A549 (cell line): ENCODE measurements at regions of chr18 and their contacts with region 1.

Region 1: GRCh38 chr18:76803814-76804213 is 18.5 kb upstream of the ZNF236 start:
- DNase-seq: peak; percentile 55 to 76
- ATAC-seq: peak; percentile 86 to 87
- H3K4me3 ChIP-seq: no peak overlapping the region
- H3K27ac ChIP-seq: peak overlapping the region; percentile 26 to 47; a peak in 2 of 6 replicates
- H3K4me1 ChIP-seq: peaks cover 3% of the 10 kb centered on the region; the same call in 1 of the 3 replicates
- CTCF ChIP-seq: peak; percentile 67
- EP300 ChIP-seq: no peak
- POLR2A ChIP-seq: no peak
- RAD21 ChIP-seq: peak; percentile 55 to 73

Region 2: DNA sequence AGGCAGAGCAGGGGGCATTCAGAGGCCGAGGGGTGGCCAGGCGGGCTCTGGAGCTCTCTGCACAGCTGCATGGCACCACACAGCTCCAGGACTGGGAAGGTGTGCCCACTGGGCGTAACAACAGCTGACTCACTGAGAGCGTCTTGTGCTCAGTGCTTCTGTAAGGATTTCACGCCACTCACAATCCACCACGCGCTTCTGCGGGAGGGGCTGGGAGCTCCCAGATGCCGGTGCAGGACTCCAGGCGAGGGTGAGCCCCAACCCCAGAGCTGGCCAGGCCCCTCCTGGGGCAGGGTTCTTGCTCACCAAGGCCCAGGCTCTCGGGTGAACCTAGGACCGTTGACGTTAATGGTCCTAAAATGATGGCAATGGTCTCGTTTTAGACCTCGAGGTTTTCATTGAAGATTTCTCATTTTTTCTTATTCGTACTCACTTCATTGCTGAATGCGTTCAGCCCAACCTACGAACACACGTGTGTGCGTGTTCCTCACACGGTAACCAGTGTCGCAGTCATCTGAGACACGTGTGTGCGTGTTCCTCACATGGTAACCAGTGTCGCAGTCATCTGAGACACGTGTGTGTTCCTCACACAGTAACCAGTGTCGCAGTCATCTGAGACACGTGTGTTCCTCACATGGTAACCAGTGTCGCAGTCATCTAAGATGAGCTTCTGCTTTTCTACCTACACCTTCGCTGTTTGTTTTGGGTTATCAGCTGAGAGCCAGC is 19.9 kb before region 1 on chr18:
- CTCF ChIA-PET with region 1: interaction called, 45 read pairs
- POLR2A ChIA-PET with region 1: interaction called, 3 read pairs
- DNase-seq: no peak
- ATAC-seq: no peak
- H3K4me3 ChIP-seq: no peak overlapping the region
- H3K27ac ChIP-seq: no peak overlapping the region
- H3K4me1 ChIP-seq: no peaks in the 10 kb centered on the region
- CTCF ChIP-seq: no peak
- EP300 ChIP-seq: no peak
- POLR2A ChIP-seq: no peak
- RAD21 ChIP-seq: no peak

Region 3: DNA sequence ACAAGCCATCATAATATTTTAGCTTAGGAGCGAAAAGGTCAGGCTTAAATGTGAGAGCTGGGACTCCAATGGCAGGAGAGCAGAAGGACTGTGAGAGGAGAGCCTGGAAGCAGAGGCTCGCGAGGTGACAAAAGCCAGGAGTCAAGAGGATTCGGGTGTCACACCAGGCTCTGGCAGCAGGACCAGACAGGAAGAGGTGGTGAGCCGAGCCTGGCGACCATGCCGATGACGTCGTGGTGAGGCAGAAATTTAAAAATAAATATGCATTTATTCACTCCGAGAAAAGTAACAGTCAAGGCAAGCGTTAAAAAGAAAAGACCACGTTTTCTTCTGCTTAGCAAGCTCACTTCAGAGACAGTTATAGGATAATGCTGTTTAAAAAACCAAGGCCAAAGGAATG is 12.7 kb before region 1 on chr18:
- CTCF ChIA-PET with region 1: interaction called, 45 read pairs
- POLR2A ChIA-PET with region 1: no interaction called
- DNase-seq: no peak
- ATAC-seq: no peak
- H3K4me3 ChIP-seq: no peak overlapping the region
- H3K27ac ChIP-seq: no peak overlapping the region
- H3K4me1 ChIP-seq: no peaks in the 10 kb centered on the region
- CTCF ChIP-seq: no peak
- EP300 ChIP-seq: no peak
- POLR2A ChIP-seq: no peak
- RAD21 ChIP-seq: no peak

Region 4: GRCh38 chr18:76822510-76823160 is 18.8 kb after region 1 on chr18 and contains the start of gene ZNF236:
- CTCF ChIA-PET with region 1: interaction called, 67 read pairs
- POLR2A ChIA-PET with region 1: interaction called, 7 read pairs
- DNase-seq: peak; percentile 34 to 76
- ATAC-seq: peak; percentile 56 to 78
- H3K4me3 ChIP-seq: peak within 1 kb of the TSS; percentile 71
- H3K27ac ChIP-seq: peak within 1 kb of the TSS; percentile 92 to 100
- H3K4me1 ChIP-seq: peaks cover 28% of the 10 kb centered on the region
- CTCF ChIP-seq: no peak
- EP300 ChIP-seq: no peak
- POLR2A ChIP-seq: 0 out of 2 replicates have a peak, but pooled peaks have one; percentile 43
- RAD21 ChIP-seq: no peak
- polyA plus RNA-seq, gene ZNF236: 7.5 and 7.8 TPM in 2 replicates

Region 5: GRCh38 chr18:76838182-76838581 is 34.4 kb after region 1 on chr18:
- CTCF ChIA-PET with region 1: interaction called, 14 read pairs
- POLR2A ChIA-PET with region 1: no interaction called
- DNase-seq: no peak
- ATAC-seq: peak; percentile 72 to 73
- H3K4me3 ChIP-seq: peak overlapping the region; percentile 13; the same call in 1 of the 3 replicates
- H3K27ac ChIP-seq: peak overlapping the region; percentile 72 to 85
- H3K4me1 ChIP-seq: peaks cover 64% of the 10 kb centered on the region
- CTCF ChIP-seq: no peak
- EP300 ChIP-seq: no peak
- POLR2A ChIP-seq: no peak
- RAD21 ChIP-seq: no peak

Region 6: DNA sequence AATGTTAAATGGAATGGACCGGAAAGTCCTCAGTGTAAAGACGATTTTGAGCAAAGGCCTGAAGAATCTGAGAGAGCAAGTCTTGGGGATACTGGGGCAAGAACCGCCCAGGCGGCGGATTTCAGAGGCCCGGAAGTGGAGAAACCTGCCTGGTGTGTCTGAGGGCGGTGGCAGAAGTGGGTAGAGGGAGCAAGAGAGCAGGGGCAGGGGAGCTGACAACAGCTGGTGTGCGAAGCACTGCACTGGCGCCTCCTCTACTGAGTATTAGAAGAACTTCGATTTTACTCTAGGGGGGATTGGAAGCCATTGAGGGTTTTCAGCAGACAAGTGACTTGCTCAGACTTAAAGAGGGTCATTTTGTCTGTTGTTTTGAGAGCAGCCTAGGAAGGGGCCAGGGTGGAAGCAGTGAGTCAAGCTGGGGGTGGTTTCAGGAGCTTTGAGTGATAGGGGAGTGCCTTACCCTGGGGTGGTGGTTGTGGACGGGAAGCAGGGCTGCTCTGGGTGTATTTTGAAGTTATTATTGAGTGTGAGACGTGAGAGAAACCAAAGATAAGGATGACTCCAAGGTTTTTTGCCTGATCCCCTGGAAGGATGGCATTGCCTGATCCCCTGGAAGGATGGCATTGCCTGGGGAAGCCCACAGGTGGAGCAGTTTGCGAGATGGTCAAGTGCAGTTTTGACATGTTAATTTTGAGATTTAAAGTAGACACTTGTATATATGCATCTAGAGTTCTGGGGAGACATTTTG is 71.0 kb after region 1 on chr18:
- CTCF ChIA-PET with region 1: interaction called, 13 read pairs
- POLR2A ChIA-PET with region 1: no interaction called
- DNase-seq: no peak
- ATAC-seq: peak; percentile 90
- H3K4me3 ChIP-seq: no peak overlapping the region
- H3K27ac ChIP-seq: peak overlapping the region in 1 of 2 experiments; percentile 21; a peak in 1 of 6 replicates
- H3K4me1 ChIP-seq: 0 out of 3 replicates have a peak, but pooled peaks cover 3% of the 10 kb centered on the region
- CTCF ChIP-seq: no peak
- EP300 ChIP-seq: no peak
- POLR2A ChIP-seq: no peak
- RAD21 ChIP-seq: no peak

Region 7: DNA sequence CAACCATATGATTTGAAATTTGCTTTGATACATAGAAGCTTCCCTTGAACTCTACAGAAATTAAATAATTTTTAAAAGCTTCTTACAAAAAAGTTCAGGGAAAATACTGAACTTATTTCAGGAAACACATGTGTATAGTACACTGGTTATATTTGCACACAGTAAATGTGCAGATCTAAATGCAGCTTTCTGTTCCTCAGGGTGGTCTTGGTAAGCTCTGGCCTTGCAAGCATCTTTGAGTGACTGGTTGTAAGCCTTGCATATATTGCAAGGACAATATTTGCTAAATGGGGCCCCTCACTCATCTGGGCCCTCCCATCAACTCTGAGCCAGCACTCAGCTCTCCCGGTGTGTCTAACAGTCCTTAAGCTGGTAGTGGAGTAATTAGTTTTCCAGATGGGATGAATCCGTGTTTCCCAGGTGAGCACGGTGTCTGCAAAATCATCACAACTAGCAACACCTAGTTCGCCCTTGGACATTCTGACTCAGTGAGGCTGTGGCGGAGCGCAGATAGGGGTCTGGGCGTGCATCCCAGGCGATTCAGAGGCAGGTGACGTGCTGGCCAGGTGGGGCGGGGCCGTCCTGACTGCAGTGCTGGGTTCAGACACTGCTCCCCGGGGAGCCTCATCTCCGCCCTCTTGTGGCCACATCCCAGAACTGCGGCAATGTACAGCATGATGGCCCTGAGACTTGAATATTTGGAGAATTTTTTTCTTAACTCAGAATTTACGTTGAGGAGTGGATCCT is 179.2 kb after region 1 on chr18:
- CTCF ChIA-PET with region 1: interaction called, 45 read pairs
- POLR2A ChIA-PET with region 1: no interaction called
- DNase-seq: peak; percentile 68 to 73
- ATAC-seq: peak; percentile 85 to 94
- H3K4me3 ChIP-seq: no peak overlapping the region
- H3K27ac ChIP-seq: no peak overlapping the region
- H3K4me1 ChIP-seq: no peaks in the 10 kb centered on the region
- CTCF ChIP-seq: peak; percentile 68
- EP300 ChIP-seq: no peak
- POLR2A ChIP-seq: no peak
- RAD21 ChIP-seq: peak; percentile 51 to 59; a peak in 4 of 5 replicates